CD8-positive, alpha-beta T cell (primary cell): ENCODE measurements at regions of chr11 and their contacts with region 1.

Region 1: GRCh38 chr11:57567515-57568329 is at the start of gene UBE2L6:
- DNase-seq: peak; percentile 29 to 92 (median 79)
- ATAC-seq: peak; percentile 77
- H3K4me3 ChIP-seq: peak within 1 kb of the TSS; percentile 86
- H3K4me3 Mint-ChIP-seq: peak within 1 kb of the TSS; percentile 100
- H3K27ac ChIP-seq: peak within 1 kb of the TSS; percentile 86 to 87
- H3K27ac Mint-ChIP-seq: peak within 1 kb of the TSS; percentile 99
- H3K4me1 ChIP-seq: peaks cover 20% of the 10 kb centered on the region
- H3K4me1 Mint-ChIP-seq: peaks cover 48% of the 10 kb centered on the region
- H3K27me3 ChIP-seq: no peaks in the 10 kb centered on the region
- H3K27me3 Mint-ChIP-seq: no peaks in the 10 kb centered on the region
- CTCF ChIP-seq: peak; percentile 93
- total RNA-seq, gene UBE2L6: 44.4 to 47.2 TPM

Region 2: GRCh38 chr11:56331861-56332491 is 1235.7 kb before region 1 on chr11:
- CTCF ChIA-PET with region 1: no interaction called
- POLR2A ChIA-PET with region 1: no interaction called
- intact Hi-C with region 1: no loop called
- DNase-seq: peak in 1 of 9 experiments; percentile 1
- ATAC-seq: no peak
- H3K4me3 ChIP-seq: no peak overlapping the region
- H3K4me3 Mint-ChIP-seq: no peak overlapping the region
- H3K27ac ChIP-seq: no peak overlapping the region
- H3K27ac Mint-ChIP-seq: no peak overlapping the region
- H3K4me1 ChIP-seq: no peaks in the 10 kb centered on the region
- H3K4me1 Mint-ChIP-seq: no peaks in the 10 kb centered on the region
- H3K27me3 ChIP-seq: no peaks in the 10 kb centered on the region
- H3K27me3 Mint-ChIP-seq: no peaks in the 10 kb centered on the region
- CTCF ChIP-seq: no peak

Region 3: GRCh38 chr11:57345555-57346211 is 222.0 kb before region 1 on chr11:
- CTCF ChIA-PET with region 1: no interaction called
- POLR2A ChIA-PET with region 1: no interaction called
- intact Hi-C with region 1: loop called in 1 of 2 experiments (anchors 5 kb)
- DNase-seq: peak; percentile 45 to 85 (median 73)
- ATAC-seq: peak; percentile 93
- H3K4me3 ChIP-seq: no peak overlapping the region
- H3K4me3 Mint-ChIP-seq: no peak overlapping the region
- H3K27ac ChIP-seq: no peak overlapping the region
- H3K27ac Mint-ChIP-seq: no peak overlapping the region
- H3K4me1 ChIP-seq: no peaks in the 10 kb centered on the region
- H3K4me1 Mint-ChIP-seq: peaks cover 2% of the 10 kb centered on the region
- H3K27me3 ChIP-seq: no peaks in the 10 kb centered on the region
- H3K27me3 Mint-ChIP-seq: peaks cover 3% of the 10 kb centered on the region
- CTCF ChIP-seq: peak; percentile 80

Region 4: DNA sequence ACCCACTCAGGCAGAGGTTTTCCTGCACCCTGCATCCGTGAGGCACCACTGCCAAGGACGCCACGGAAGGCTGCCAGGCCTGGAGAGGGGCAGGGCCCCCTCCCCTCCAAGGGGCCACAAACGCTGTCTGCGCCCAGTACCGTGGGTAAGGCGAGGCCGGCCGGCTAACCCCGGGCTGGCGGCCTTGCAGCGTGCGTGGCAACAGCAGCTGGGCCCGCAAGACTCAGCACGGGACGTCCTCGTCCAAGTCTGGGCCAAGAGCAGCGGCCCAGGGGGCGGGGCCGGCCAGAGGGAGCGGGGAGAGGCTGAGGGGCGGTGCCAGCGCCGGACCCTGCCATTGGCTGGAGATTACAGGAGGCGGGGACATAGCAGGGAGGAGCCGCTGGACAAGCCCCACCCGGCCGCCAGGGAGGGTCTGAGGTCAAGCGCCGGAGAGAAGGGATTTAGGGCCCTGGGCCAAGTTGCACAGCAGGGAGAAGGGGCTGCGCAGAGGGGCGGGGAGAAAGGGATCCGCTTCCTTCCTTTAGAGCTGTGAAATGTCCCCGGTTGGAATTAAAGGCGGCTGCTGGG is 68.2 kb before region 1 on chr11:
- CTCF ChIA-PET with region 1: interaction called, 4 read pairs
- POLR2A ChIA-PET with region 1: no interaction called
- intact Hi-C with region 1: loop called in 1 of 2 experiments (anchors 10 kb)
- DNase-seq: peak in 3 of 9 experiments; percentile 20 to 37 (median 25)
- ATAC-seq: no peak
- H3K4me3 ChIP-seq: no peak overlapping the region
- H3K4me3 Mint-ChIP-seq: no peak overlapping the region
- H3K27ac ChIP-seq: no peak overlapping the region
- H3K27ac Mint-ChIP-seq: no peak overlapping the region
- H3K4me1 ChIP-seq: no peaks in the 10 kb centered on the region
- H3K4me1 Mint-ChIP-seq: peaks cover 5% of the 10 kb centered on the region
- H3K27me3 ChIP-seq: no peaks in the 10 kb centered on the region
- H3K27me3 Mint-ChIP-seq: no peaks in the 10 kb centered on the region
- CTCF ChIP-seq: no peak

Region 5: GRCh38 chr11:57657194-57658022 is 89.7 kb after region 1 on chr11 and contains the start of gene CLP1:
- CTCF ChIA-PET with region 1: interaction called, 4 read pairs
- POLR2A ChIA-PET with region 1: interaction called, 3 read pairs
- intact Hi-C with region 1: loop called in 1 of 2 experiments (anchors 1 kb)
- DNase-seq: peak; percentile 97 to 100 (median 99)
- ATAC-seq: peak; percentile 94
- H3K4me3 ChIP-seq: peak within 1 kb of the TSS; percentile 59 to 74
- H3K4me3 Mint-ChIP-seq: peak within 1 kb of the TSS; percentile 94
- H3K27ac ChIP-seq: peak within 1 kb of the TSS; percentile 83
- H3K27ac Mint-ChIP-seq: peak within 1 kb of the TSS; percentile 90
- H3K4me1 ChIP-seq: peaks cover 11% of the 10 kb centered on the region
- H3K4me1 Mint-ChIP-seq: peaks cover 43% of the 10 kb centered on the region
- H3K27me3 ChIP-seq: no peaks in the 10 kb centered on the region
- H3K27me3 Mint-ChIP-seq: no peaks in the 10 kb centered on the region
- CTCF ChIP-seq: no peak
- total RNA-seq, gene CLP1: 22.7 to 27.1 TPM

Region 6: DNA sequence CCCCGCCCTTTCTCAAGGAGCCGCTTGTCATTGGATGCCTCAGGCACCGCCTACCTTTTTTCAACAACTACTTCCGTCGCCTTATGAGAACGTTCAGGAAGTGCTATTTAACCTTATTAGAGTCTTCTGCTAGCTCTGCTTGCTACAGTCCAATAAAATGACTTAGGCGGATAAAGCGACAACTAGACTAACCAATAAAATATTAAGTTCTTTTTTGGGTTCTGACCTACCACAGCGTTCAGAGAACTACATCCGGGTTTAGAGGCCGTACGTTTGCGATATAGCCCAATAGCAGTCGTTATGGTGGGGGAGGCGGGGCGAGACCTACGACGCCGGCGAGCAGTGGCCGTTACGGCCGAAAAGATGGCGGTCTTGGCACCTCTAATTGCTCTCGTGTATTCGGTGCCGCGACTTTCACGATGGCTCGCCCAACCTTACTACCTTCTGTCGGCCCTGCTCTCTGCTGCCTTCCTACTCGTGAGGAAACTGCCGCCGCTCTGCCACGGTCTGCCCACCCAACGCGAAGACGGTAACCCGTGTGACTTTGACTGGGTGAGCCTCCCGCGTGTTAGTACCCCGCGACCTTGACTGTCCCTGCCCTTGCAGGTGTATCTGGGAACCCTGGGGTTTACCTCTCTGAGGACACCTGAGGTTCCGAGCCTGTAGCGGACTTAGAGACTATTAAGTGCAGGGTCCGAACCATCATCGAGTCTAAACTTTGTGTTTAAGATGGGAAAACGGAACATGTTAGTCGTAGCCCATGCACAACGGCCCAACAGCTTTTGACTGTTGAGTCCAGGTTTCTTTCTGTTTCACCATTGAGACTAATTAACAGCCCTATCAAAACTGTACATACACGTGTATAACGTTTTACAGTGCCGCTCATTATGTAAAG is 144.8 kb after region 1 on chr11 and contains the start of gene TMX2:
- CTCF ChIA-PET with region 1: no interaction called
- POLR2A ChIA-PET with region 1: interaction called, 8 read pairs
- intact Hi-C with region 1: loop called (anchors 1 kb)
- DNase-seq: peak; percentile 78 to 97 (median 88)
- ATAC-seq: peak; percentile 87
- H3K4me3 ChIP-seq: peak within 1 kb of the TSS; percentile 98 to 100
- H3K4me3 Mint-ChIP-seq: peak within 1 kb of the TSS; percentile 98
- H3K27ac ChIP-seq: peak within 1 kb of the TSS; percentile 91 to 93
- H3K27ac Mint-ChIP-seq: peak within 1 kb of the TSS; percentile 97
- H3K4me1 ChIP-seq: peaks cover 33% of the 10 kb centered on the region
- H3K4me1 Mint-ChIP-seq: peaks cover 52% of the 10 kb centered on the region
- H3K27me3 ChIP-seq: no peaks in the 10 kb centered on the region
- H3K27me3 Mint-ChIP-seq: no peaks in the 10 kb centered on the region
- CTCF ChIP-seq: no peak
- total RNA-seq, gene TMX2: 38.5 to 42.1 TPM

Region 7: GRCh38 chr11:58513747-58514367 is 946.1 kb after region 1 on chr11:
- CTCF ChIA-PET with region 1: interaction called, 4 read pairs
- POLR2A ChIA-PET with region 1: no interaction called
- intact Hi-C with region 1: loop called in 1 of 2 experiments (anchors 5 kb)
- DNase-seq: peak in 3 of 9 experiments; percentile 23 to 62 (median 49)
- ATAC-seq: no peak
- H3K4me3 ChIP-seq: no peak overlapping the region
- H3K4me3 Mint-ChIP-seq: no peak overlapping the region
- H3K27ac ChIP-seq: no peak overlapping the region
- H3K27ac Mint-ChIP-seq: no peak overlapping the region
- H3K4me1 ChIP-seq: no peaks in the 10 kb centered on the region
- H3K4me1 Mint-ChIP-seq: peaks cover 5% of the 10 kb centered on the region
- H3K27me3 ChIP-seq: no peaks in the 10 kb centered on the region
- H3K27me3 Mint-ChIP-seq: no peaks in the 10 kb centered on the region
- CTCF ChIP-seq: peak; percentile 45

Region 8: DNA sequence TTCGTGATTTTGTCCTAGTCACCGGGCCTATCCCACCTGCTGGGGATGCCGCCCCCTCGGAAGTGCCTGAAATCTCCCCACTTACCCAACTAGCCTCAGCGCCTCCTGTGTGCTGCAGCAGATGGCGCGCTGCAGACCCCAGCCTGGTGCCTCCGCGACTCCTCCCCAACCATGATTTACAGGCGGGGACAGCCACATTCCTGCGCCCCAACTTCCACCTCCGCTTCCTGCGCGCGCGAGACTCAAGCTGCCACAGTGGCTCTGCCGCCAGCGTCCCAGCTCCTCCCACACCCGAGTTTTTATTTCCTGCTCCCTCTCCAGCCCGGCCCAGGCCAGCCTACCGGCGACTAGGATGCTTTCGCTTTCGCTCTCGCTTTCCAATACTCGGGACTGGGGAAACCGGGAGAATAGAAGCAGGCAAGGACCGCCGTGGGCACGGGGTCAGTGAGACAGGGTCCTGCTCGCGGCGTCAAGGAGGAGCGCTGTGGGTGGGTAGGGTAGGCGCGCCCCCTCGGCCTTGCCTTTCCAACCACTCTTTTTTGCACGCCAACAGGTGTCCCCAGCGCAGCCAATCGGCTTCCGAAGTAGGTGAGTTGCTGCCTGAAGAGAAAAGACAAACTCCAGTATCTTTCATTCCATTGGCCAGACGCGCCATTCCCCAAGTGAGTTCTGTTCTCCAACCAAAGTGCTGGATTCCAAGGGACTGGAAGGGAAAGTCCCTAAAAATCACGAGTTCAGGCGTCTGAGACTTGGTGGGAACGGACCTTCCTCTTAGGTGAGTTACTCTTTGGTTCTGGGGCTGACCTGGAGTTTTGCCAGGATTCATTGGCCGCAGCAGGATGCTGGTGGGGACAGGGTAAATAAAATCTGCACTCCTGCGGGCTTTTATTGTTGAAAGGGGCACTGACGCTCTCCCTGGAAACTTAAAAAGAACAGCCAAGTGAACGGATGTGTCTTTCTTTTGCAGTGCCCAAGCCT is 1575.1 kb after region 1 on chr11 and contains the start of gene FAM111A:
- CTCF ChIA-PET with region 1: no interaction called
- POLR2A ChIA-PET with region 1: no interaction called
- intact Hi-C with region 1: loop called in 1 of 2 experiments (anchors 5 kb)
- DNase-seq: peak; percentile 58 to 95 (median 87)
- ATAC-seq: peak; percentile 83
- H3K4me3 ChIP-seq: peak within 1 kb of the TSS; percentile 84 to 95
- H3K4me3 Mint-ChIP-seq: peak within 1 kb of the TSS; percentile 98
- H3K27ac ChIP-seq: peak within 1 kb of the TSS; percentile 81 to 95
- H3K27ac Mint-ChIP-seq: peak within 1 kb of the TSS; percentile 97
- H3K4me1 ChIP-seq: peaks cover 31% of the 10 kb centered on the region
- H3K4me1 Mint-ChIP-seq: peaks cover 54% of the 10 kb centered on the region
- H3K27me3 ChIP-seq: no peaks in the 10 kb centered on the region
- H3K27me3 Mint-ChIP-seq: no peaks in the 10 kb centered on the region
- CTCF ChIP-seq: peak; percentile 45
- total RNA-seq, gene FAM111A: 23.3 to 33.4 TPM